ENCODE measurements at regions of chr15 and their contacts with region 1.

Region 1: GRCh38 chr15:62306851-62307504 is 141.9 kb upstream of the C2CD4B start:
- DNase-seq: peak; percentile 55
- H3K4me3 ChIP-seq: no peak overlapping the region
- H3K27ac ChIP-seq: peak overlapping the region; percentile 22
- H3K4me1 ChIP-seq: peaks cover 12% of the 10 kb centered on the region
- H3K27me3 ChIP-seq: no peaks in the 10 kb centered on the region
- CTCF ChIP-seq: peak; percentile 57 to 70

Region 2: DNA sequence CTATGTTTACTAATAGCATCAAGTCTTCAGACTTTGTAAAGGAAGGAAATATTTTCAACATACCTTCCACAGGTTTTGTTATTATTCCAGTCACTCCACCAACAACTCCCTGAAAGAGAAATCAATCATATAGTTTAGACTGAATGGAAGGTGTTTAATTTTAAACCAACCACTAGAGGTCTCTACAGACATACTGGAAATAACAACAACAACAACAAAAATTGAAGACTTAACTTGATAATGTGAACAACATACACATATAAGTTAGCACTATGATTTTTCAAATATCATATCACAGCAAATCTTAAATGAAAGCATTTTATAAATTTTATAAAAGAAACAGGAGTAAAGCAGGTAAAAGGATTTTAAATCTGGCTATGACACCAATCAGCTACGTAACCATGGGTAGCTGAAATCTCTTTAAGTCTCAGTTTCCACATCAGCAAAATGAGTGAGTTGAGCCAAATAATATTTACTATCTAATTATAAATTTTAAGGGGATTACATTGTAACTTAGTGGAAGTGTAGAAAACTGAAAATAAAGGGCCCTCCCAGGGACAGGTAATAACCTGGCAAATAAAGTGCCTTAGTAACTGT is 435.0 kb before region 1 on chr15:
- CTCF ChIA-PET with region 1: interaction called, 3 read pairs
- dilution Hi-C with region 1: no loop called
- in situ Hi-C with region 1: loop called in 1 of 2 experiments (anchors 25 kb)
- intact Hi-C with region 1: loop called (anchors 1 kb)
- DNase-seq: no peak
- H3K4me3 ChIP-seq: no peak overlapping the region
- H3K27ac ChIP-seq: no peak overlapping the region
- H3K4me1 ChIP-seq: no peaks in the 10 kb centered on the region
- H3K27me3 ChIP-seq: no peaks in the 10 kb centered on the region
- CTCF ChIP-seq: peak; percentile 55 to 57

Region 3: DNA sequence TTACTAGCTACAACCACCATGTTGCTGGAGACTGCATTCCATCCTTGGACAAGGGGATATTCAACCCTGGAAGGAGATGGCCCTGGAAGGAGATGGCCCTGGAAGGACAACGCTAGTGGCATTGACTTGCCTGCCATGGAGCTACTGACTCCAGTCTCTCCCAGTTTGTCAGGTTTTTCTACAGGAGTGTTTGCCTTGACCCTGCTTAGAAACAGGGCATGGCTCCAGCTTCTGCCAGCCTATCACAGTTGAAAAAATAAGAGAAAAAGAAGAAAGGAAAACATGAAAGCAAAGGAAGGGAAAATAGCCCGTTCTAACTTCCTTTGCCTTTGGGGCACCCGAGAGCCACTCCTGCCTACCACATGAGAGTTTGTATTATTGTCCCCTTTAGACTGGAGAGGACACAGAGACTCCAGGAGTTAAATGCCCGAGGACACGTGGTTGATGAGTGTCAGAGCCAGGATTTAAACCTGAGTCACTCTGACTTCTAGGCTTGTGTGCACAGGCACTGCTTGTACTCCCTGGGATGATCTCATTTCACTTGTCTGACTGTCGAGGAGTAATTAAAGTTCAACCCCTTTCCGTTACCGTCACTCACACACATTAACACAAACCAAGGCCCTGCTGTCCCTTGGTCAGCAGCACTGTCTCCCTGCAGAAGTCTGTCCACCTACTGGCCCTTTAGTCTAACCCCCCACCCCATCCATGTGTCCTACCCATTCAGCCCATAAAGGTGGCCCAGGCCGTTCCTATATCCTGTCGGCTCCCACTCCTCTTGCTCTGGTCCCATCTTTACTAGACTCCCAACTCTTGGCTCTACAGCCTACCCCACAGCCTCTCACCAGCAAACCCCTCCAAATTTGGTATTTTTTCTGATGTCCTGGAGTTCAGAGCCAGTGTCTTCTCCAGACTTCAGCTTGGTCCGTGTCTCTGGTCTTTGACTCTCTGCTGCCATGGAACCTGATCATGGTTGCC is 194.1 kb before region 1 on chr15:
- CTCF ChIA-PET with region 1: no interaction called
- dilution Hi-C with region 1: no loop called
- in situ Hi-C with region 1: no loop called
- intact Hi-C with region 1: loop called (anchors 2 kb)
- DNase-seq: peak; percentile 96
- H3K4me3 ChIP-seq: no peak overlapping the region
- H3K27ac ChIP-seq: peak overlapping the region; percentile 33
- H3K4me1 ChIP-seq: peaks cover 35% of the 10 kb centered on the region
- H3K27me3 ChIP-seq: no peaks in the 10 kb centered on the region
- CTCF ChIP-seq: no peak

Region 4: DNA sequence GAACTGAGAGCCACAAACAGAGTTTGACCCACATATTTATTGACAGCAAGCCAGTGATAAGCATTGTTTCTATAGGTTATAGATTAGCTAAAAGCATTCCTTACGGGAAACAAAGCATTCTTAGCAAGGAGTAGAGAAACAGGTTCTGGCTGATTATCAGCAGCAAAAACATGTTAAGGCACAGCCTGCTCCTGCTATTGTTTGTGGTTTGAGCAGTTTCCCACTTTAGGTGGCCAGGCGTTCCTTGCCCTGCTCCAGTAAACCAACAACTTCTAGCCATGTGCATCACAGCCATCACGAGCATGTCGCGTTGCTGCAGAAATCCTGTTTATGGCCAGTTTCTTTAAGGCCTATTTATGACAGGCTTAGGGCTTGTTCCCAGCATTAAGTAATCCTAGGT is 97.2 kb before region 1 on chr15:
- CTCF ChIA-PET with region 1: no interaction called
- dilution Hi-C with region 1: no loop called
- in situ Hi-C with region 1: no loop called
- intact Hi-C with region 1: loop called (anchors 10 kb)
- DNase-seq: peak; percentile 83
- H3K4me3 ChIP-seq: peak overlapping the region in 1 of 3 experiments; percentile 13
- H3K27ac ChIP-seq: peak overlapping the region; percentile 36
- H3K4me1 ChIP-seq: peaks cover 24% of the 10 kb centered on the region
- H3K27me3 ChIP-seq: no peaks in the 10 kb centered on the region
- CTCF ChIP-seq: no peak

Region 5: GRCh38 chr15:62323353-62323890 is 16.4 kb after region 1 on chr15:
- CTCF ChIA-PET with region 1: interaction called, 18 read pairs
- dilution Hi-C with region 1: no loop called
- in situ Hi-C with region 1: no loop called
- intact Hi-C with region 1: no loop called
- DNase-seq: no peak
- H3K4me3 ChIP-seq: no peak overlapping the region
- H3K27ac ChIP-seq: no peak overlapping the region
- H3K4me1 ChIP-seq: no peaks in the 10 kb centered on the region
- H3K27me3 ChIP-seq: no peaks in the 10 kb centered on the region
- CTCF ChIP-seq: no peak

Region 6: GRCh38 chr15:62880278-62880677 is 573.3 kb after region 1 on chr15:
- CTCF ChIA-PET with region 1: no interaction called
- dilution Hi-C with region 1: no loop called
- in situ Hi-C with region 1: no loop called
- intact Hi-C with region 1: no loop called
- DNase-seq: no peak
- H3K4me3 ChIP-seq: no peak overlapping the region
- H3K27ac ChIP-seq: no peak overlapping the region
- H3K4me1 ChIP-seq: no peaks in the 10 kb centered on the region
- H3K27me3 ChIP-seq: no peaks in the 10 kb centered on the region
- CTCF ChIP-seq: no peak